Motor neuron (in vitro differentiated cells): ENCODE measurements at regions of chr1 and their contacts with region 1.

Region 1: GRCh38 chr1:78839704-78840277 is 166.7 kb downstream of the ADGRL4 start:
- ATAC-seq: peak in 2 of 8 experiments; percentile 29 to 41
- H3K4me3 ChIP-seq: no peak overlapping the region
- H3K27ac ChIP-seq: no peak overlapping the region
- H3K4me1 ChIP-seq: peaks cover 3 to 11% of the 10 kb centered on the region in 2 donors

Region 2: DNA sequence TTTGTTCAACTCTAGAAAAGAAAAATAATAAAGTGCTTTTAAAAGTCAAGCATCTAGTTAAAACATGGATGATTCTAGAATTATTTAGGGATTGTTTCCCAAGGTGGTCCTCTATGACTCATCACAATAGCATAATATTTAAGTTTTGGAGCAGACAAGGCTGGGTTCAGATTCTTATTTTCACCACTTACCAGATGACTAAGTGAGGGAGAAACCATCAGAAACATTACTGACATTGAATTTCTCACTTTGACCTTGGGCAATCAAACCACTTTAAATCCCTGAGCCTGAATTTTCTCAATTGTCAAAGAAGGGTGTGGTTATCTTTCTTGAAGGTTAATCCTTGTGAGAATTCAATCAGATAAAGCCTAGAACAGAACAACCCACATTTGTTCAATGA is 451.5 kb before region 1 on chr1:
- in situ Hi-C with region 1: no loop called
- ATAC-seq: no peak
- H3K4me3 ChIP-seq: no peak overlapping the region
- H3K27ac ChIP-seq: no peak overlapping the region
- H3K4me1 ChIP-seq: no peaks in the 10 kb centered on the region

Region 3: DNA sequence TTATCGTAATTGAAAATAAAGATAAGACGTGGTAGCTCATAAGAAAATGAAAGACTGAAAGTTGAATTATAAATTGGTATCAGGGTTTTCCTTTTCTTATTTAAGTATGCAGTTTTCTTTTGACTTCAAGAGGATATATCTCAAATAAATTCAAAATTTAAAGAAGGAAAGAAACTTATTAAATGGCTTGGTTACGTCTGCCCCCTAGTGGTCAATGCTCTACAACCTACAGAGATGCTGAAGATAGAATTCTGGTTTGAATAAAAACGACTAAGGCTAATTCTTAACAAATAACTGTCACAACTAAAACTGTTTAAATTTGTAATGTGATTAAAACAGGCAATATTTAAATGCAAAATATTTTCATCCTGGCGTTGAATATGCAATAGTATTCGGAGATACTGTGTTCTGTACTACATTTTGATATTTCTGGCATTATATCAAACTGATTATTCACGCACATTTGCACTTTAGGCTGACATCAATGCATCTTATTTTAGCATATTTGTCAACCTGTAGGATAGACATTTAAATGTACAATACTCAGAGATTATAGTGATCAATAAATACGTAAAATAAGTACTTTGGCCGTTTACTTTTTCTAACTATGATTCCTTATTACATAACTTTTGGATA is 163.3 kb before region 1 on chr1:
- in situ Hi-C with region 1: loop called in 1 of 9 experiments (anchors 25 kb)
- ATAC-seq: peak in 4 of 8 experiments; percentile 45 to 80 (median 68)
- H3K4me3 ChIP-seq: no peak overlapping the region
- H3K27ac ChIP-seq: no peak overlapping the region
- H3K4me1 ChIP-seq: peaks cover 0 to 2% of the 10 kb centered on the region in 2 donors

Region 4: GRCh38 chr1:79005945-79006344 is 166.2 kb after region 1 on chr1:
- in situ Hi-C with region 1: no loop called
- ATAC-seq: no peak
- H3K4me3 ChIP-seq: no peak overlapping the region
- H3K27ac ChIP-seq: no peak overlapping the region
- H3K4me1 ChIP-seq: no peaks in the 10 kb centered on the region

Region 5: DNA sequence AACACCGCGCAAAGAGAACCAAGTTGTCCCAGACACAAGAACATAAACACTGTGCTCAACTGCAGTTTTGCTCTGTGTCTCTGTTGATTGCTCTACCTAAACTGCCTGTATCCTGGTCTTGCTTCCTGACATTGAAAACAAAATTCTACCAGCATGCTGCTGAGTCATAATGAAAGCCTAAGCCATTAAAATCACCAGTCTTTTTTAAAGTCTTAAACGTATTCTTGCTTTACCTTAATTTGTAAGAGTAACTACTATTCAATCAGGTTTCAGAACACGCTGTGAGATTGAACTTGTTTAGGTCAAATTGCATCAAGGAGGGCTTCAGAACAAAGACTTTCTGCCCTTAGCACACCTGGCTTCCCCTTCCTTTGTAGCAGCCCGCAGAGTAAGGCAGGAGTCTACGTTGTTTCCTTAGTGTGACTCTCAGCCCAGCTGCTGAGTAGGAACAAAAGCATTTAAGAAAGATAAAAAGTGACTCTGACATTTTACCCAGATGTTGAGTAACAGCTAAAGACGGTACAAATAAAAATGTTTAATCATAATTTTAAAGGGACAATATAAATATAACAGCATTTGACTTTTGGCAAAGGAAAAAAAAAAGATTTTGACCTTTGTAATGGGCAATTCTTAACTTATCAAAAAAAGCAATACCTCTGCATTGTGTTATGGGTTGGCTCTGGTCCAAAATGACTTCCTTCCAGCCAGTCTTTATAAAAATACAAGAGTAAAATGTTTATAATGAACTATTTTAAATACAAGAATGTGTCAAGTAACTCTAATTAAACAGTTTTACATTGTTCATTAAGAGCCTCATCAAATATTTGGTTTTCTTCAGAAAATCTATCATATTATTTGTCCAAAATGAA is 353.7 kb after region 1 on chr1:
- in situ Hi-C with region 1: loop called in 2 of 9 experiments (anchors 10 to 25 kb)
- ATAC-seq: no peak
- H3K4me3 ChIP-seq: no peak overlapping the region
- H3K27ac ChIP-seq: no peak overlapping the region
- H3K4me1 ChIP-seq: no peaks in the 10 kb centered on the region

Region 6: DNA sequence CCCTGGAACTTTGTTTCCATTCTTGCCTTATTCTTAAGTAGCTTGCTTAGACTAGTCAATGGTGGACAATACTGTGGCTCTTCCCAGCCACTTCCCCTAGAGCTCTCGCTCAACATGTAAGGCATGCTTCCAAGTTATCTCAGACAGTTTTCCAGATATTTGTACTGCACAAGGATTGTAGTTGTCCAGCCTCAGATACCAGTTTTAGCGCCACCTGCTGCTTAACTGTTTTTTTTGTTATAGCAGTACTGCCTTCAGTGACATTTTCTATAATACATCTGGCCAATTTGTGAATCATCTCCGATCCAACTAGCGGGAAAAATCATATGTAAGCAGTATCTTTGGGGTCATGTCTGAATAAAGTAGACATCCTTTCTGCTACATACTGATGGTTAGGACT is 513.4 kb after region 1 on chr1:
- in situ Hi-C with region 1: loop called in 1 of 9 experiments (anchors 25 kb)
- ATAC-seq: peak in 4 of 8 experiments; percentile 38 to 97 (median 90)
- H3K4me3 ChIP-seq: no peak overlapping the region
- H3K27ac ChIP-seq: no peak overlapping the region
- H3K4me1 ChIP-seq: no peaks in the 10 kb centered on the region

Region 7: DNA sequence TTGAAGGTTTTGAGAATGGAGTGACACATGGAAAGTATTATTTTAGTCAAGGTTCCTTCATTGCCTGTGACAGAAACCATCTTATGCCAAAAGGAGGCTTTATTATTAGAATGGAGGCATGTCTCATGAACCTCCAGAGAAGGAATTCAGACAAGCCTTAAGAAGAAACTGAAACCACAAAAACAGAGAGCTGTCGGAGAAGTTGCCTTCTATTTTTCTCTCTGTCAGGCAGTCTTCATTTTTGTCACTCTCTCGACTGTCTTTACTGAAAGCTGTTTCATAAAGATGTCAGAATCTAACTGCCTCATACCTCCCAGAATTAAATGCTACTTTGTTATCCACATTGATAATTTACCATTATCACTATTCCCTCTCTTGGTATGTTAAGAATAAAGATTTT is 601.4 kb after region 1 on chr1:
- in situ Hi-C with region 1: no loop called
- ATAC-seq: peak in 1 of 8 experiments; percentile 32
- H3K4me3 ChIP-seq: no peak overlapping the region
- H3K27ac ChIP-seq: no peak overlapping the region
- H3K4me1 ChIP-seq: no peaks in the 10 kb centered on the region